Calu3 (cell line): ENCODE measurements at regions of chr10 and their contacts with region 1.

Region 1: GRCh38 chr10:79195091-79195923 is 126.5 kb downstream of the ZMIZ1 start:
- DNase-seq: peak; percentile 91
- H3K4me3 Mint-ChIP-seq: no peak overlapping the region
- H3K27ac Mint-ChIP-seq: peak overlapping the region; percentile 24
- H3K4me1 Mint-ChIP-seq: peaks cover 35% of the 10 kb centered on the region
- H3K27me3 Mint-ChIP-seq: no peaks in the 10 kb centered on the region
- CTCF ChIP-seq: peak; percentile 97

Region 2: GRCh38 chr10:78211561-78212051 is 983.7 kb before region 1 on chr10:
- CTCF ChIA-PET with region 1: no interaction called
- intact Hi-C with region 1: loop called (anchors 5 kb)
- DNase-seq: peak; percentile 34
- H3K4me3 Mint-ChIP-seq: no peak overlapping the region
- H3K27ac Mint-ChIP-seq: no peak overlapping the region
- H3K4me1 Mint-ChIP-seq: no peaks in the 10 kb centered on the region
- H3K27me3 Mint-ChIP-seq: peaks cover 95% of the 10 kb centered on the region
- CTCF ChIP-seq: peak; percentile 30

Region 3: GRCh38 chr10:78600740-78601139 is 594.6 kb before region 1 on chr10:
- CTCF ChIA-PET with region 1: interaction called, 11 read pairs
- intact Hi-C with region 1: no loop called
- DNase-seq: no peak
- H3K4me3 Mint-ChIP-seq: no peak overlapping the region
- H3K27ac Mint-ChIP-seq: no peak overlapping the region
- H3K4me1 Mint-ChIP-seq: no peaks in the 10 kb centered on the region
- H3K27me3 Mint-ChIP-seq: peaks cover 85% of the 10 kb centered on the region
- CTCF ChIP-seq: no peak

Region 4: DNA sequence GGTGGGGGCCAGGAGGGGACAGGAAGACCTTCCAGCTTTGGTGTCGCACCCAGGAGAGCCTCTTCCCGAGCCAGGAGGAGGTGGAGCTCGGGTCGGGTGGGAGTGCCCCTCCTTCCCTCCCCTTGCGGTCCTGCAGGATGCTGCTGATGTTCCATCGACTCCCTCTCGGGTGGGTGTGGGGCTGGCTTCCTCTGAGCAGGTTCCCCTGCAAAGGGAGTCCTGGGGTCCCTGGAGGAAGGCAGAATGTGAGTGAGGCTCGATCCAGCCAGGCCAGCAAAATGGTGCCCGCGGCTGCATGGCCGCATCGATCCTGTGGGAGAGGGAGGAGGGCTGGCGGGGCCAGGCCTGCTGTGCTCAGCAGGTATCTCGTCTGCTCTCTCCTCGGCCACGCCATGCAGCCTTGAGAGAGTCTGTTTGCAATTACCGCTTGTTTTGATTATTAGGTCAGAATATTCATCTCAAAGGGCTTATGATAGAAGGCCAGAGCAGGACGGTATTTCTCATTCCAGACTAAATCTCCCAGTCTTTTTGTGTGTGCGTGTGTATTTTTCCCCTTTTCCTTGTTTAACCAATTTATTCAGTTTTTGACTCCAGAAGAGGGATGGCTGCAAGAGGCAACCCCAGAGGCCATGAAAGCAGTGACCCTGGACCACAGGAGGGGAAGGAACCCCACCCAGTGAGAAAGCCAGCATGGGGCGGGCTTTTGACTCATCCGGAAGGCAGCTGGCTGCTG is 263.8 kb before region 1 on chr10:
- CTCF ChIA-PET with region 1: no interaction called
- intact Hi-C with region 1: loop called (anchors 10 kb)
- DNase-seq: no peak
- H3K4me3 Mint-ChIP-seq: no peak overlapping the region
- H3K27ac Mint-ChIP-seq: no peak overlapping the region
- H3K4me1 Mint-ChIP-seq: peaks cover 8% of the 10 kb centered on the region
- H3K27me3 Mint-ChIP-seq: peaks cover 31% of the 10 kb centered on the region
- CTCF ChIP-seq: no peak

Region 5: GRCh38 chr10:79057481-79058275 is 137.6 kb before region 1 on chr10:
- CTCF ChIA-PET with region 1: no interaction called
- intact Hi-C with region 1: no loop called
- DNase-seq: no peak
- H3K4me3 Mint-ChIP-seq: no peak overlapping the region
- H3K27ac Mint-ChIP-seq: no peak overlapping the region
- H3K4me1 Mint-ChIP-seq: peaks cover 20% of the 10 kb centered on the region
- H3K27me3 Mint-ChIP-seq: peaks cover 51% of the 10 kb centered on the region
- CTCF ChIP-seq: no peak

Region 6: DNA sequence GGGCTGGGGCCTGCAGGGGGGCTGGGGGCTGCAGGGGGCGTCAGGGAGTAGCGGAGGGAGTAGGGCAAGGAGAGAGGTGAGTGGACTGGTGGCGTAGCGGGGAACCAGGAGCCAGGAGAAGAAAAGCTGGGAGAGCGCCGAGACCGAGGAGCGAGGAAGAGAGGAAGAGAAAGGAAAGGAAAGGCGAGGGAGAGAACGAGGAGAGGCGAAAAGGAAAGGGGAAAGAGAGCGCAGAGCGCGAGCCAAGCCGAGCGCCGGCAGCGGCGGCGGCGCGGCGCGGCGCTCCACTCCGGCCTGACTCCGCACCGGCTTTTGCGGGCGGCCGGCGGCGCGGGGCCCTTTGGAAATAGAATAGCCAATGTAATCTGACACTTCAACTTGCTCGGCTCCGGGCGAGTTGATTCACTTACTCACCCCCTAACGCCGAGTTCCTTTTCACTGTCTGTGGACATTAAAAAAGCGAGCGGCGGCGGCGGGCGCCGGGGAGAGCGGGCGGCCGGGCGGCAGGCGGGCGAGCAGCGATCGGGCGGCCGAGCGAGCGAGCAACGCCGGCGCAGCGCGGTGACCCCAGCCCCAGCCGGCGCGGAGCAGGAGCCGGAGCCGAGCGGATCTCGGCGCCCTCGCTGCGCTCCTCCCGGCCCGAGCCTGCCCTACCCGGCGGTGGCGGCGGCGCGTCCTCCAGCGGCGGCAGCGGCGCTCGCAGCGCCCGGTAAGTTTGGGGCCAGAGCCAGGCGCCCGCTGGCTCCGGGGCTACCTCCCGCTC is 126.6 kb before region 1 on chr10 and contains the start of gene ZMIZ1:
- CTCF ChIA-PET with region 1: interaction called, 7 read pairs
- intact Hi-C with region 1: loop called (anchors 1 kb)
- DNase-seq: peak; percentile 92
- H3K4me3 Mint-ChIP-seq: peak within 1 kb of the TSS; percentile 70
- H3K27ac Mint-ChIP-seq: peak within 1 kb of the TSS; percentile 63
- H3K4me1 Mint-ChIP-seq: peaks cover 31% of the 10 kb centered on the region
- H3K27me3 Mint-ChIP-seq: no peaks in the 10 kb centered on the region
- CTCF ChIP-seq: peak; percentile 23
- total RNA-seq, gene ZMIZ1: 20.3 and 23.5 TPM in 2 replicates

Region 7: DNA sequence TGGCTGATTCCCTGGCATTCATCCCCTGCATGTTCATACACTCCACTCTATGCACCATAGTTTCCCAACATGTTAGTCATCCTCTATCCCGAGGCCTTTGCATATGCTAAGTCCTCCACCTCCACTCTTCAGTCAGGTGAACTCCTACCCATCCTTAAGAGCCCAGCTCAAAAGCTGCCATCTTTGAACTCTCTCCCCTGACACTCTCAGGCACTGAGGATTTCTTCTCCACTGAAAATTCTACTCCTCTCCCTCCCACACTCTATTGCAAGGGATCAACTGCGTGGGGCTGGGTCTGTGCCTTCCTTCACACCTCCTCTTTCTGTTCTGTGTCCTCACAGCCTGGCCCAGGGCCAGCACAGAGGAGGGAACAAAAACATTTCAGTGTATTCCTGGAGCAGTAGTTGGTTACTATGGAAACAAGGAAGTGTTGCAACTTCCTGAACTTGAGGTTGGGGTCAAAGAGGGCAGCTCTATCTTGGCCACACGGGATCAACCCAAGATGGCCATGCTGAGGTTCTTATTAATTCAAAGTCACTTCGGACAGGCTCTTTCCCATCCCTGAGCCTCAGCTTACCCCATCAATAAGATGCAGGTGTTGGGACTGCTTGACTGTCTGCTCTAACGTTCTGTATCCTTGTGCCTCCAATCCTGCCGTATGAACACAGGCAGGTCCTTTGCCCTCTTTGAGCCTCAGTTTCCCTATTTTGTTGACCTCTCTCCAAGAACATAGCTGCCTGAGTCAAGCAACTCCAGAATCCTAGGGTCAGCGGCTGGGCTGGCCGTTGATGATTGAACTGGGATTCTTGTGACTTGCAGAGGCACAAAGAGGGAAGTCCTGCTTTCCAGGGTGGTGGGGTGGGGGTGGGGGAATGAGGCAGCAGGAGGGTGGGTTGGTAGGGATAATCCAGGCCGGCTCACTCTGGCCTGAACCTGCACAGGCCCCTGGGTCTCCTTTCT is 111.0 kb before region 1 on chr10:
- CTCF ChIA-PET with region 1: no interaction called
- intact Hi-C with region 1: no loop called
- DNase-seq: peak; percentile 91
- H3K4me3 Mint-ChIP-seq: peak overlapping the region; percentile 26
- H3K27ac Mint-ChIP-seq: peak overlapping the region; percentile 83
- H3K4me1 Mint-ChIP-seq: peaks cover 65% of the 10 kb centered on the region
- H3K27me3 Mint-ChIP-seq: no peaks in the 10 kb centered on the region
- CTCF ChIP-seq: no peak

Region 8: DNA sequence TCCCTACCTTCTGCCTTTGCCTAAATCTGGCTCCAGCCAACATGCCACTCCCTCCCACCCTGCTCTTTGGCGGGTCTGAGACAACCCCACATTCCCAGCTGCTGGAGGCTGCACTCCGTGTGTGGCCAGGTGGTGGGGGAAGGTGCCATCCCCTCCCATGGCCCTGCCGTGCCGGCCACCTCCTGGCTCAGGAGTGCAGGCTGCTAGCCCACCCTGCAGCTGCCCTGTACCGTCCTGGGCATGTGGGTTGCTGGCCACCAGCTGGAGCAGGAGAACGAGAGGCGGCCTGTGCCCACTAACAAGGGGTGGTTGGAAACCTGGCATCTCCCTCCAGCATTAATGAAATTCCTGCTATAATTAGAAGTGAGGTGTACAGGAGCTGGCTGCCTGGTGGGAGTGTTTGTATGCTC is 29.0 kb before region 1 on chr10:
- CTCF ChIA-PET with region 1: no interaction called
- intact Hi-C with region 1: no loop called
- DNase-seq: no peak
- H3K4me3 Mint-ChIP-seq: no peak overlapping the region
- H3K27ac Mint-ChIP-seq: no peak overlapping the region
- H3K4me1 Mint-ChIP-seq: peaks cover 26% of the 10 kb centered on the region
- H3K27me3 Mint-ChIP-seq: no peaks in the 10 kb centered on the region
- CTCF ChIP-seq: no peak